Naive thymus-derived CD4-positive, alpha-beta T cell (primary cell): ENCODE measurements at regions of chr12 and their contacts with region 1.

Region 1: GRCh38 chr12:12334367-12335040 is 15.5 kb downstream of the MANSC1 start:
- DNase-seq: peak; percentile 36 to 65 (median 50)
- ATAC-seq: peak; percentile 87
- H3K4me3 ChIP-seq: no peak overlapping the region
- H3K4me3 Mint-ChIP-seq: peak overlapping the region in 6 of 10 donors; percentile 12 to 45 (median 27)
- H3K27ac ChIP-seq: no peak overlapping the region
- H3K27ac Mint-ChIP-seq: peak overlapping the region in 8 of 9 donors; percentile 35 to 84 (median 56)
- H3K4me1 ChIP-seq: peaks cover 0 to 10% of the 10 kb centered on the region in 2 donors
- H3K4me1 Mint-ChIP-seq: peaks cover 15 to 44% (median 34%) of the 10 kb centered on the region in 7 donors
- H3K27me3 ChIP-seq: no peaks in the 10 kb centered on the region
- H3K27me3 Mint-ChIP-seq: no peaks in the 10 kb centered on the region

Region 2: GRCh38 chr12:11553871-11554533 is 780.5 kb before region 1 on chr12:
- CTCF ChIA-PET with region 1: interaction called, 3 read pairs
- POLR2A ChIA-PET with region 1: no interaction called
- intact Hi-C with region 1: loop called in 1 of 2 experiments (anchors 2 kb)
- DNase-seq: peak in 7 of 9 donors; percentile 41 to 66 (median 58)
- ATAC-seq: peak; percentile 81
- H3K4me3 ChIP-seq: no peak overlapping the region
- H3K4me3 Mint-ChIP-seq: peak overlapping the region in 8 of 10 donors; percentile 12 to 71 (median 36)
- H3K27ac ChIP-seq: no peak overlapping the region
- H3K27ac Mint-ChIP-seq: peak overlapping the region in 8 of 9 donors; percentile 38 to 94 (median 58)
- H3K4me1 ChIP-seq: peaks cover 0 to 15% of the 10 kb centered on the region in 2 donors
- H3K4me1 Mint-ChIP-seq: peaks cover 11 to 47% (median 32%) of the 10 kb centered on the region in 7 donors
- H3K27me3 ChIP-seq: no peaks in the 10 kb centered on the region
- H3K27me3 Mint-ChIP-seq: peaks cover 0 to 26% (median 0%) of the 10 kb centered on the region in 5 donors

Region 3: DNA sequence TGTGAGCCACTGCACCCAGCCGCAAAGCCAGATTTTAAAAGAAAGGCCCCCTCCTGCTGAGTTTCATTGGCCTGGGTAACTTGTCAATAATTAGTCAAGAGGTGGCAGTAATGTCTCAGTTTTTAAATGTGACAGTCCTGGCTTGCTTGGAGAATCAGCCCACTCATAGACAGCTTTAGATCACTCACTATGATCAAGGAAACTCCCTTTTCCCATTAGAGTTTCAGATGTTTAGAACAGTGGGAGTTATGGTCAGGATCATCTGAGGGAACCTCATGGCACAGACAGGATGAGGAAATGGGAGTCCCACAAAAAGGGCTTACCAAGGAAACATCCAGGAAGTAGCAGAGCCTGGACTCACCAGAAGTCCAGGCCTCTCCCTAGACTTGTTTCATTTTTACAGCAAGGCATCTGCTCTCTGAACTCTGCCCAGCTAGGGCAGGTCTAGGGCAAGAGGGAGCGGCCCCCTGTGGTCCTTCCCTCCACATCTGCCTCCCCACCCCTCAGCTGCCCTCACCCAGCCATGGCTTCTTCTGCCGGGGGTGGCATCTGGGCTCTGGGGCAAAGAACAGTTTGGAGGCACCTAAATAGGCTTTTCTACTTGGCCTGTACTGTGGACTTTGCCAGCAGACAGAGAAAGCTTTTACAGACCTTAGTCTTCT is 252.5 kb before region 1 on chr12:
- CTCF ChIA-PET with region 1: no interaction called
- POLR2A ChIA-PET with region 1: no interaction called
- intact Hi-C with region 1: loop called in 1 of 2 experiments (anchors 2 kb)
- DNase-seq: peak in 1 of 9 donors; percentile 4
- ATAC-seq: no peak
- H3K4me3 ChIP-seq: no peak overlapping the region
- H3K4me3 Mint-ChIP-seq: no peak overlapping the region
- H3K27ac ChIP-seq: no peak overlapping the region
- H3K27ac Mint-ChIP-seq: peak overlapping the region in 1 of 9 donors; percentile 57
- H3K4me1 ChIP-seq: no peaks in the 10 kb centered on the region
- H3K4me1 Mint-ChIP-seq: peaks cover 0 to 4% (median 0%) of the 10 kb centered on the region in 7 donors
- H3K27me3 ChIP-seq: no peaks in the 10 kb centered on the region
- H3K27me3 Mint-ChIP-seq: peaks cover 0 to 5% (median 0%) of the 10 kb centered on the region in 5 donors

Region 4: DNA sequence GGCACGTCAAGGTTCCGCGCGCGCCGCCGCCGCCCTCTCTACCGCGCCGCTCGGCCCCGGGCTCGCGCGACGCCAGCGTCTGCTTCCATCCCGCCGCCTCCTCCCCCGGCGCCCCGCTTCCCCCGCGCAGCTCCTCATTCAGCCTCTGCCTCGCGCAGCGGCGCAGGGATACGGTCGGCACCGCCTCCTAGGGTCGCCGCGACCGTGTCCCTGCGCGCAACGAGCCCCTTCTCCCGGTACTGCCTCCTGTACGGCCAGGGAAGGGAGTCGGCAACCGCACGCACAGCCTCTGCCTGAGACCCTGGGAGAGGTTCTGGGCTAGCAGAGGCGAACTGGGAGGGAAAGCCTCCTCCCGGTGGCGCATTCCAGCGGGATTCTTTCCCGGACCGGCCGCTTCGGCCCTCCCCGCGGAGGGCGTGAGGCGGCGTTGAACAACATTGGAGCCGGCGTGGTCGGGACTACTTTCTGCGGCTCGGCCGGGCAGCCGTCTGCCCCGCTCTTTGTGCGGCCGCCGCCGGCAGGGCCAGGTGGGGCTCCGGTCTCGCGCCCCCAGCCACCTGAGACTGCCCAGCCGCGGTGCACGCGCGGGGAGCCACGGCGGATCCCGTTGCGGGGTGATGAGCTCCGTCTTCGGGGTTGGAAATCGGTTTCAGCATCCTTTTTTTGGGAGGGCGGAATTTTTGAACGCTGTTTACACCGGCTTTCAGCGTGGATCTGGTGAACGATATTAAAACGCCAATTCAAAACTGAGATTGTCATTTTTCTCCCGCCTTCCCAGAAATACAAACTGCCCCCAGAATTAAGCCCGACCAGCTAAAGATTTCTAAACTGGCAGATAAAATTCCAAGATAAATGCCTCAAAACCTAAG is 67.4 kb before region 1 on chr12 and contains the start of gene LRP6:
- CTCF ChIA-PET with region 1: interaction called, 3 read pairs
- POLR2A ChIA-PET with region 1: no interaction called
- intact Hi-C with region 1: loop called in 1 of 2 experiments (anchors 2 kb)
- DNase-seq: peak; percentile 57 to 83 (median 75)
- ATAC-seq: peak; percentile 91
- H3K4me3 ChIP-seq: peak within 1 kb of the TSS; percentile 86
- H3K4me3 Mint-ChIP-seq: peak within 1 kb of the TSS; percentile 79 to 93 (median 88)
- H3K27ac ChIP-seq: peak within 1 kb of the TSS; percentile 68
- H3K27ac Mint-ChIP-seq: peak within 1 kb of the TSS; percentile 29 to 88 (median 73)
- H3K4me1 ChIP-seq: peaks cover 8 to 10% of the 10 kb centered on the region in 2 donors
- H3K4me1 Mint-ChIP-seq: peaks cover 14 to 40% (median 31%) of the 10 kb centered on the region in 7 donors
- H3K27me3 ChIP-seq: peaks cover 0 to 10% of the 10 kb centered on the region in 2 donors
- H3K27me3 Mint-ChIP-seq: peaks cover 0 to 53% (median 14%) of the 10 kb centered on the region in 5 donors
- total RNA-seq, gene LRP6: 1.6 to 12.6 (median 7.4) TPM

Region 5: DNA sequence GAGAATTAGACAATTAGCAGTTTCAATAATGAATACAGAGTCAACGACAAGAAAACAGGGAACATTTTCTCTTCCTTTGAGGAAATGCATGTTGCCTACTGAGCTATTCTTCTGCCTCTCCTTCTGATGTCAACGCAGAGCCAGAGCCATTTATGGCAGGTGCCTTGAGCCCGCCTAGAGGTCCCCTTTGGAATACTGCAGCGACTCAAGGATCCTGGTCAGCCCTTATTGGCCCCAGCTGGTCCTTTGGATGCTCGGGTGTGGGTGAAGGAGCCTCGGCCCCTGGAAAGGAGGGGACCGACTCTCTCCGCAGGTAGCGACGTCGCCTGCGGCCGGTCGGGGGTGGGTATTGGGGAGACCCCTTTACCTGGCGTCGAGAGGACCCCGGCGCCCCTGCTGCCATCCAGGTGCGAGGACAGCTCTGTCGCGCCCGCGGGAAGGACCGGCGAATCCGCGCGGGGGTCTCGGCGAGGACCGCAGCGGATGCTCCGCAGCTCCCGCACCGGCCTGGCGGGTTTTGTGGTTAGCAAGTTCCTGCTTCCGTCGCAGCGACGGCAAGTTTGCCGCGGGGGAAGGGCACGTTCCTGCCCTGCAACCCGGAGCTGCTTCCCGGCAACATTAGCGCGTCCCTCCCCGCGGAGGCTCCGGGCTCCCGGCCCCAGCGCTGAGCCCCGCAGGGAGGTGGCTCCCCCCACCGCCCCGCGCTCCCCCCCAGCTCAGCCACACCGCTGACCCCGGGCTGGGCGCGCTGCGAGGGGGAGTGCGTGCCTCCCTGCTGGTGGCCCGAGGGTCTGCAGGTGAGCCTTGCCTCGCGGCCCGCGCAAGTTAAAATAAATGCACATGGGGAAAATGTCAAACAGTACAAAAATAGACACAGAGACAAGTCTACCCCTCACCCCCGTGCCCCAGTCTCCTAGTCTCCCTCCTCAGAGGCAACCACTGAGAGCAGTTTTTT is 15.5 kb after region 1 on chr12 and contains the start of gene MANSC1:
- CTCF ChIA-PET with region 1: interaction called, 6 read pairs
- POLR2A ChIA-PET with region 1: interaction called, 6 read pairs
- intact Hi-C with region 1: loop called in 1 of 2 experiments (anchors 1 kb)
- DNase-seq: peak; percentile 39 to 69 (median 68)
- ATAC-seq: peak; percentile 78
- H3K4me3 ChIP-seq: peak within 1 kb of the TSS; percentile 48
- H3K4me3 Mint-ChIP-seq: peak within 1 kb of the TSS; percentile 74 to 85 (median 81)
- H3K27ac ChIP-seq: peak within 1 kb of the TSS; percentile 69
- H3K27ac Mint-ChIP-seq: peak within 1 kb of the TSS in 8 of 9 donors; percentile 76 to 95 (median 89)
- H3K4me1 ChIP-seq: peaks cover 6 to 18% of the 10 kb centered on the region in 2 donors
- H3K4me1 Mint-ChIP-seq: peaks cover 26 to 68% (median 42%) of the 10 kb centered on the region in 7 donors
- H3K27me3 ChIP-seq: no peaks in the 10 kb centered on the region
- H3K27me3 Mint-ChIP-seq: peaks cover 0 to 7% (median 0%) of the 10 kb centered on the region in 5 donors
- total RNA-seq, gene MANSC1: 0.60 to 1.3 (median 0.94) TPM

Region 6: GRCh38 chr12:14327711-14328381 is 1993.3 kb after region 1 on chr12:
- CTCF ChIA-PET with region 1: no interaction called
- POLR2A ChIA-PET with region 1: no interaction called
- intact Hi-C with region 1: no loop called
- DNase-seq: no peak
- ATAC-seq: peak; percentile 84
- H3K4me3 ChIP-seq: no peak overlapping the region
- H3K4me3 Mint-ChIP-seq: no peak overlapping the region
- H3K27ac ChIP-seq: no peak overlapping the region
- H3K27ac Mint-ChIP-seq: no peak overlapping the region
- H3K4me1 ChIP-seq: no peaks in the 10 kb centered on the region
- H3K4me1 Mint-ChIP-seq: peaks cover 0 to 2% (median 0%) of the 10 kb centered on the region in 7 donors
- H3K27me3 ChIP-seq: no peaks in the 10 kb centered on the region
- H3K27me3 Mint-ChIP-seq: no peaks in the 10 kb centered on the region